ENCODE measurements at regions of chr6 and their contacts with region 1.

Region 1: DNA sequence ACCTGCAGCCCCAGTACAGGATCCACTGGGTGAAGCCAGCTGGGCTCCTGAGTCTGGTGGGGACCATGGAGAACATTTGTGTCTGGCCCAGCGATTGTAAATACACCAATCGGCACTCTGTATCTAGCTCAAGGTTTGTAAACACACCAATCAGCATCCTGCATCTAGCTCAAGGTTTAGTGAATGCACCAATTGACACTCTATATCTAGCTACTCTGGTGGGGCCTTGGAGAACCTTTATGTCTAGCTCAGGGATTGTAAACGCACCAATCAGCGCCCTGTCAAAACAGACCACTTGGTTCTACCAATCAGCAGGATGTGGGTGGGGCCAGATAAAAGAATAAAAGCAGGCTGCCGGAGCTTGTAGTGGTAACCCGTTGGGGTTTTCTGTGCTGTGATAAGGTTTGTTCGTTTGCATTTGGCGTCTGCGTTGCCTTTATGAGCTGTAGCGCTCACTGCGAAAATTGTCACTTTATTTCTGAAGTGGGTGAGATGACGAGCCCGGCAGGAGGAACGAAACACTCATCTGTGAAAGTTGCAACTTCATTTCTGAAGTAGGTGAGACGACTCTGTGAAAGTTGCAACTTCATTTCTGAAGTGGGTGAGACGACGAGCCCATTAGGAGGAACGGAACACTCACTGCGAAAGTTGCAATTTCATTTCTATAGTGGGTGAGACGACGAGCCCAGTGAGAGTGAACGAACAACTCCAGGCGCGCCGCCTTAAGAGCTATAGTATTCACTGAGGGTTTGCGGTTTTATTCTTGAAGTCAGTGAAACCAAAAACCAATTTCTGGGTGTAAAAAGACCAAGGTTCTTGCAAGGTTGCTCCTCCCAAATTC is 31.1 kb downstream of the SERPINB6 start:
- DNase-seq: peak; percentile 92
- H3K4me3 Mint-ChIP-seq: peak overlapping the region; percentile 54
- H3K27ac Mint-ChIP-seq: peak overlapping the region; percentile 99
- H3K4me1 Mint-ChIP-seq: peaks cover 67% of the 10 kb centered on the region
- H3K27me3 Mint-ChIP-seq: peaks cover 1% of the 10 kb centered on the region

Region 2: GRCh38 chr6:2862712-2863181 is 77.5 kb before region 1 on chr6:
- CTCF ChIA-PET with region 1: interaction called, 6 read pairs
- POLR2A ChIA-PET with region 1: interaction called, 18 read pairs
- intact Hi-C with region 1: loop called (anchors 1 kb)
- DNase-seq: peak; percentile 84
- H3K4me3 Mint-ChIP-seq: peak overlapping the region; percentile 39
- H3K27ac Mint-ChIP-seq: peak overlapping the region; percentile 96
- H3K4me1 Mint-ChIP-seq: peaks cover 77% of the 10 kb centered on the region
- H3K27me3 Mint-ChIP-seq: no peaks in the 10 kb centered on the region

Region 3: GRCh38 chr6:2900821-2901644 is 39.2 kb before region 1 on chr6:
- CTCF ChIA-PET with region 1: interaction called, 9 read pairs
- POLR2A ChIA-PET with region 1: interaction called, 8 read pairs
- intact Hi-C with region 1: loop called (anchors 1 kb)
- DNase-seq: no peak
- H3K4me3 Mint-ChIP-seq: peak overlapping the region; percentile 99
- H3K27ac Mint-ChIP-seq: peak overlapping the region; percentile 95
- H3K4me1 Mint-ChIP-seq: peaks cover 41% of the 10 kb centered on the region
- H3K27me3 Mint-ChIP-seq: no peaks in the 10 kb centered on the region

Region 4: DNA sequence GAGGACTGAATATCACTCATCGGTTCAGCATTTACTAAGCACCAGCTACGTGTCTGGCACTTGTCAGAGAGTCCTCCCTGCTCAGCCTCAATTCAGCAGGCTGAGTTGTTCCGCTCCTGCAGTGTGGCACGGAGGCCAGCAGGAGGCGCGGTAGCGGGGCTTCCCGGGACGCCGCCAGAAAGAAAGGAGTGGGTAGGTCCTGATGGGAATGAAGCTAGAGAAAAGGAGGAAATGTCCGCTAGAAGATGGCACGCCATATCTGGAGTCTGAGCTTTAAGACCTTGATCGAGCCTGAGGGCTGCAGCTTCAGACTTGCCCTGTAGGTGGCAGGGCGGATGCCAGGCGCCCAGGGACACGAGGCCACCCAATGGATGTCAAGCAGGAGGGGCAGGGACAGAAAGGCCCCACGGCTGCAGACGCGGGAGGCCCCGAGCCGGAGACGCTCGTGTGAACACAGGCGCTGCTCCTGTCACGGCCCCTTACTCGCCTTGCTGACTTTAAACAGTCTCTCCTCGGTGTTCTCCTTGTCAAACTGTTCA is 12.4 kb after region 1 on chr6:
- CTCF ChIA-PET with region 1: interaction called, 20 read pairs
- POLR2A ChIA-PET with region 1: interaction called, 3 read pairs
- intact Hi-C with region 1: no loop called
- DNase-seq: peak; percentile 65
- H3K4me3 Mint-ChIP-seq: no peak overlapping the region
- H3K27ac Mint-ChIP-seq: no peak overlapping the region
- H3K4me1 Mint-ChIP-seq: no peaks in the 10 kb centered on the region
- H3K27me3 Mint-ChIP-seq: no peaks in the 10 kb centered on the region

Region 5: DNA sequence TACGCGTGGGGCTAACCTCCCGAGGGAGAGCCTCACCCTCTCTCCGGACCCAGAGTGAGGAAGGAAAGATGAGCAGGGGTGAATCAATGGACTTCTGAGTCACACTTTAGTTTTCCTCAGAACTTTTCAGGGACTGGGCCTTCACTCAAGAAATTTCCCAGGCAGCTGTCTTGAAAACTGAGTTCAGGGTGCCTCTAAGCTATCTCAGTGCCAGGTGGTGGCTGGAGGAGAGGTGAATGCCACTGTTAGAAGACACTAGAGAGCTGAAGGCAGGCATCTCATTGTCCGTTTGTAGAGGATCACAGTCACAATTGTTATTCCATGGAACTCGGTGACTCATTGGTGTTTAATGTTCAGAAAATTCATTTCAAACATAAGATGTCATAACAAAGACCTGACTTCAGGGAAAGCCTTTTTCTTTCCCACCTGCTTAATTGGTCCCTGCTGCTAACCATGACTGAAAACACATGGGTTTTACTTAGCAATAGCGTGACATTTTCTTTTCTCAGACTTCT is 36.4 kb after region 1 on chr6:
- CTCF ChIA-PET with region 1: interaction called, 5 read pairs
- POLR2A ChIA-PET with region 1: interaction called, 9 read pairs
- intact Hi-C with region 1: loop called (anchors 2 kb)
- DNase-seq: peak; percentile 33
- H3K4me3 Mint-ChIP-seq: no peak overlapping the region
- H3K27ac Mint-ChIP-seq: peak overlapping the region; percentile 88
- H3K4me1 Mint-ChIP-seq: peaks cover 40% of the 10 kb centered on the region
- H3K27me3 Mint-ChIP-seq: peaks cover 8% of the 10 kb centered on the region

Measured in activated CD4-positive, alpha-beta memory T cell treated with anti-CD3 and anti-CD28 coated beads for 36 hours (primary cell).